ENCODE measurements at regions of chr2 and their contacts with region 1.

Region 1: GRCh38 chr2:54579684-54580620 is 123.8 kb downstream of the SPTBN1 start:
- DNase-seq: peak; percentile 71
- ATAC-seq: peak; percentile 60
- H3K4me3 Mint-ChIP-seq: peak overlapping the region; percentile 59
- H3K27ac Mint-ChIP-seq: peak overlapping the region; percentile 95
- H3K4me1 Mint-ChIP-seq: peaks cover 90% of the 10 kb centered on the region
- H3K27me3 Mint-ChIP-seq: no peaks in the 10 kb centered on the region
- CTCF ChIP-seq: no peak

Region 2: DNA sequence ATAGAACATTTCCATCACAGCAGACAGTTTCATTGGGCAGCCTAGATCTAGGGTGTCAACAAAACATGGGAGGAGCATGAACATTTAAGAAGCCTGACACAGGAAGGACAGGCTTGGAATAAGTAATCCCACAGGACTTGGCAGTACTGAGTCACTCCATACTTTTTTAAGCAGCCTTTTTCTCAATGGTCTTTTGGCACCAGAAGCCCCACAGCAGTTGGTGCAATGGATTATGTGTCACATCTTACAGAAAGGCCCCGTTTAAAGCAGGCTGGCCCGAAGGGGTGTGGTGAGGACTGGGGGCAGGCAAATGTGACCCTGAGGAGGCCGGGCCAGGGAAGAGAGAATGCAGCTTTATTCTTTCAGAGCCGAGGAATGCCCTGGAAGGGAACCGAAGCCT is 97.2 kb before region 1 on chr2:
- CTCF ChIA-PET with region 1: no interaction called
- POLR2A ChIA-PET with region 1: no interaction called
- intact Hi-C with region 1: no loop called
- DNase-seq: no peak
- ATAC-seq: no peak
- H3K4me3 Mint-ChIP-seq: no peak overlapping the region
- H3K27ac Mint-ChIP-seq: no peak overlapping the region
- H3K4me1 Mint-ChIP-seq: no peaks in the 10 kb centered on the region
- H3K27me3 Mint-ChIP-seq: no peaks in the 10 kb centered on the region
- CTCF ChIP-seq: no peak

Region 3: GRCh38 chr2:54597153-54597848 is 17.3 kb after region 1 on chr2:
- CTCF ChIA-PET with region 1: interaction called, 14 read pairs
- POLR2A ChIA-PET with region 1: interaction called, 13 read pairs
- intact Hi-C with region 1: no loop called
- DNase-seq: peak; percentile 70
- ATAC-seq: peak; percentile 63
- H3K4me3 Mint-ChIP-seq: peak overlapping the region; percentile 70
- H3K27ac Mint-ChIP-seq: peak overlapping the region; percentile 98
- H3K4me1 Mint-ChIP-seq: peaks cover 93% of the 10 kb centered on the region
- H3K27me3 Mint-ChIP-seq: no peaks in the 10 kb centered on the region
- CTCF ChIP-seq: no peak